Esophagus muscularis mucosa (tissue), 4 donors: ENCODE measurements at regions of chr9 and their contacts with region 1.

Region 1: DNA sequence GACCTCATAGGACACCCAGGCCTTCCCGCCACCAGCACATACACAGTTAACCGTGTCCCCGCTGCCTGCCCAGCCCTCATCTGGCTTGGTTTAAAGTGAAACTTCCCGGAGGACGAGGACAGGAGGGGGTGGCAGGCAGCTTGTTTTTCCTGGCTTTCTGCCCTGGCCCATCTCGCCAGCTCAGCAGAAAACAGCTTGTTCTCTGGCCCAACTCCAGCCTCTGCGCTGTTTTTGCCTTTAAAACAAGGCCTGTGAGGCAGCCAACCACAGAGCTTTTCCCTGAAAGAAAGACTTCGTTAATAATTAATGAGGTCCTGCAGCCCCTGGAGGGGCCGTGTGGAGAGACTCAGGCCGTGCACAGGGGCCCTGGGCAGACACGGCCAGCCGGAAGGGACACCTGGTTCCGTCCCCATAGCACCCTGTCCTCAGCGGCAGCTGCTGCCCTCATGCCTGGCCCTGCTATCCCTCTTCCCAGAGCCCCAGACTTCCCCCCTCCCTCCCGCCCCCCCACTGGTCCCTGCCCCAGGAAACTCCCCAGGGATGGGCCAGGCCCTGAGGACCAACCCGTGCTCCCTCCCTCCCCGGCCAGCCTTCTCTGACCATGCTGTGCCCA is 108.7 kb downstream of the RXRA start:
- DNase-seq: peak; percentile 98
- H3K4me3 ChIP-seq: peak overlapping the region; percentile 22 to 43 (median 33)
- H3K27ac ChIP-seq: peak overlapping the region; percentile 89 to 90 (median 90)
- H3K4me1 ChIP-seq: peaks cover 70 to 91% (median 83%) of the 10 kb centered on the region in 4 donors
- H3K27me3 ChIP-seq: no peaks in the 10 kb centered on the region
- CTCF ChIP-seq: no peak
- EP300 ChIP-seq: no peak
- POLR2A ChIP-seq: no peak

Region 2: GRCh38 chr9:134283111-134283515 is 151.9 kb before region 1 on chr9:
- intact Hi-C with region 1: loop called (anchors 5 kb)
- DNase-seq: no peak
- H3K4me3 ChIP-seq: peak overlapping the region; percentile 9 to 35 (median 18)
- H3K27ac ChIP-seq: peak overlapping the region; percentile 69 to 79 (median 76)
- H3K4me1 ChIP-seq: peaks cover 20 to 25% (median 24%) of the 10 kb centered on the region in 4 donors
- H3K27me3 ChIP-seq: no peaks in the 10 kb centered on the region
- CTCF ChIP-seq: no peak
- EP300 ChIP-seq: no peak
- POLR2A ChIP-seq: no peak

Region 3: DNA sequence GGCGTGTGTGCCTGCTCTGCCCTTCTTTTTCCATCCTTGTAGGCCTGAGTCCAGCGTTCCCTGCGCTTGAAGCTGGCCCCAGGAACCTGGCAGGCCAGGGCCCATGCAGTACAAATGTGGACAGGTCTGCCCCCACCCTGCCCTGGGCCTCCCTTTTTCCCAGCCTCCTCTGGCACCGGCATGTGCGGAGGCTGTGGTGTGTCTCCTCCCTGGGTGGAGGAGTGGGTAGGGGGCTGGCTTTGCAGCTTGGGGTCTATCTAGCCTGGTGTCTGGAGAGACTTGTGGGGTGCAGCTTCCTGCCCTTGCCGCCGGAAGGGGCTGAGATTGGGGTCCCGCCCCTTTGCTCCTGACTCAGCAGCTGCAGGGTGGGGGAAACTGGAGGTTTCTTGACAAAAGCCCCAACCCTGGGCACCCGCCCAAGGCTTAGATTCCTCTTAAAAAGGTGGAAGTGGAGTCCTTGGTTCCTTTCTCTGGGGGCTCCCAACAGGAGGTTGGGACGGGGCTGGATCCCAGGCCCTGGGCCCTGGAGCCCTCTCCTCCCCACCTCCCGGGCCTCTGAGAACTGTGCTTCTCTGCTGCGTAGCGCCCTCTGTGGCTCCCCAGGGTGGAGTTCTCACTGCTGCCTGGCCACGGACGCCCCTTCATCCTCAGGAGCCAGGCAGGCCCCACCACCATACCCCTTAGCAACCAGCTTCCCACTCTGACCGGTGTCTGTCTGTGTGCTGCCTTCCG is 90.8 kb before region 1 on chr9:
- intact Hi-C with region 1: no loop called
- DNase-seq: no peak
- H3K4me3 ChIP-seq: no peak overlapping the region
- H3K27ac ChIP-seq: peak overlapping the region; percentile 37 to 57 (median 48)
- H3K4me1 ChIP-seq: peaks cover 98 to 100% (median 100%) of the 10 kb centered on the region in 4 donors
- H3K27me3 ChIP-seq: no peaks in the 10 kb centered on the region
- CTCF ChIP-seq: no peak
- EP300 ChIP-seq: no peak
- POLR2A ChIP-seq: no peak

Region 4: GRCh38 chr9:134371731-134372130 is 63.3 kb before region 1 on chr9:
- intact Hi-C with region 1: loop called (anchors 5 kb)
- DNase-seq: no peak
- H3K4me3 ChIP-seq: no peak overlapping the region
- H3K27ac ChIP-seq: peak overlapping the region; percentile 89 to 97 (median 94)
- H3K4me1 ChIP-seq: peaks cover 83 to 96% (median 95%) of the 10 kb centered on the region in 4 donors
- H3K27me3 ChIP-seq: no peaks in the 10 kb centered on the region
- CTCF ChIP-seq: no peak
- EP300 ChIP-seq: no peak
- POLR2A ChIP-seq: no peak